ENCODE measurements at regions of chr22 and their contacts with region 1.

Region 1: GRCh38 chr22:17430412-17430811 is 61.2 kb downstream of the CECR2 start:
- DNase-seq: peak; percentile 75 to 78
- ATAC-seq: peak; percentile 96 to 98
- H3K4me3 ChIP-seq: no peak overlapping the region
- H3K27ac ChIP-seq: peak overlapping the region; percentile 86 to 93 (median 90)
- H3K4me1 ChIP-seq: peaks cover 67 to 73% of the 10 kb centered on the region in 2 donors
- H3K27me3 ChIP-seq: no peaks in the 10 kb centered on the region
- CTCF ChIP-seq: no peak
- POLR2A ChIP-seq: no peak

Region 2: GRCh38 chr22:17266251-17266971 is 164.0 kb before region 1 on chr22:
- in situ Hi-C with region 1: no loop called
- intact Hi-C with region 1: loop called (anchors 5 kb)
- DNase-seq: peak; percentile 13 to 71
- ATAC-seq: peak; percentile 14 to 26
- H3K4me3 ChIP-seq: no peak overlapping the region
- H3K27ac ChIP-seq: peak overlapping the region; percentile 93 to 98 (median 95)
- H3K4me1 ChIP-seq: peaks cover 32 to 43% of the 10 kb centered on the region in 2 donors
- H3K27me3 ChIP-seq: no peaks in the 10 kb centered on the region
- CTCF ChIP-seq: no peak
- POLR2A ChIP-seq: no peak

Region 3: GRCh38 chr22:17359501-17359900 is 70.9 kb before region 1 on chr22:
- in situ Hi-C with region 1: no loop called
- intact Hi-C with region 1: no loop called
- DNase-seq: no peak
- ATAC-seq: no peak
- H3K4me3 ChIP-seq: no peak overlapping the region
- H3K27ac ChIP-seq: no peak overlapping the region
- H3K4me1 ChIP-seq: no peaks in the 10 kb centered on the region
- H3K27me3 ChIP-seq: no peaks in the 10 kb centered on the region
- CTCF ChIP-seq: no peak
- POLR2A ChIP-seq: no peak

Region 4: DNA sequence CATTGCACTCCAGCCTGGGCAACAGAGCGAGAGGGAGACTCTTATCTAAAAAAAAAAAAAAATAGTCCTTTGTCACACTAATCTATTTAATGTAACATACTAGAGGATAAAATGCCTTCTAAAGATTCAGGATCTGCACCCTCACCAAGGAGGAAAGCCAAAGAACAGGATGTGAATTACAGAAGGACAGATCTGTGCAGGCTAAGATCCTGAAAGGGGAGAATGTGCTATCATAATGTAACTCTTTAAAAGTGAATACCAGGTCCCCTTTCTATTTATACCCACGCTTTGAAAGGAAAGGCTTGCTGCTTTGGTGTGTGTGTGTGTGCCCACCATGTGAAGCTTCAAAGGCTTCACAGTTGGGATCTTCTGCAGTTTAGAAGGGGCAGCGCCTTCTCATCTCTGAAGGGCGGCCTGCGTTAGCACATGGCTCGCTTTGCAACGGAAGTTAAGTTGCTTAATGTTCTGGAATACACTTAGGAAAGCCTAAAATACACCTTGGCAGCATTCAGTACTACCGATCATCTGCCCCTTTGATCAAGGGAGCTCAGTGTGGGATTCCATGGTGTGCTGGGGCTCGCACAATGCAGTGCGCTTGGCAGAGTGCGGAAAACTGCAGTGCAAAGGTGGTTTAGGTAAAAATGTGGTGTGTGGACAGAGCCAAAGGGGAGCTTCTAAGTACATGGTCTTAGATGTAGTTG is 54.3 kb before region 1 on chr22:
- in situ Hi-C with region 1: no loop called
- intact Hi-C with region 1: loop called (anchors 2 kb)
- DNase-seq: peak; percentile 32 to 68
- ATAC-seq: peak; percentile 78 to 91
- H3K4me3 ChIP-seq: peak overlapping the region in 3 of 4 donors; percentile 0 to 21 (median 14)
- H3K27ac ChIP-seq: peak overlapping the region; percentile 91 to 99 (median 93)
- H3K4me1 ChIP-seq: peaks cover 76 to 79% of the 10 kb centered on the region in 2 donors
- H3K27me3 ChIP-seq: no peaks in the 10 kb centered on the region
- CTCF ChIP-seq: no peak
- POLR2A ChIP-seq: no peak

Region 5: DNA sequence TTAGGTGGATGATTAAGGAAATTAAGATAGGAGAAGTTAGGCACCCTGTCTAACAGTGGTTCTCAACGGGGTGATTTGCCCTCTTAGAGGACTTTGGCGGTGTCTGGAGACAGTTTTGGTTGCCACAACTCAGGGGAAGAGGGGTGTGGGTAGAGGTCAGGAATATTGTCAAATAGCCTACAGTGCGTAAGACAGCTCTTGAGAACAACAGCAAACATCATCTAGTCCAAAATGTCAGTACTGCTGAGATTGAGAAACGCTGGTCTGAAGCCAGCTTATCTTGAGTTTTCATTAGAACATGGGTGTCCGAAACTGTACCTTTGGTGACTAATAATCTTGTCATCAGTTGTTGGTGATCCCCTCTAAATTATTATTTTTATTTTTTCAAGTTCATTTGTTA is 22.8 kb before region 1 on chr22:
- in situ Hi-C with region 1: no loop called
- intact Hi-C with region 1: loop called (anchors 2 kb)
- DNase-seq: no peak
- ATAC-seq: peak; percentile 32 to 68
- H3K4me3 ChIP-seq: no peak overlapping the region
- H3K27ac ChIP-seq: peak overlapping the region; percentile 67 to 85 (median 75)
- H3K4me1 ChIP-seq: peaks cover 53 to 59% of the 10 kb centered on the region in 2 donors
- H3K27me3 ChIP-seq: no peaks in the 10 kb centered on the region
- CTCF ChIP-seq: no peak
- POLR2A ChIP-seq: no peak

Region 6: DNA sequence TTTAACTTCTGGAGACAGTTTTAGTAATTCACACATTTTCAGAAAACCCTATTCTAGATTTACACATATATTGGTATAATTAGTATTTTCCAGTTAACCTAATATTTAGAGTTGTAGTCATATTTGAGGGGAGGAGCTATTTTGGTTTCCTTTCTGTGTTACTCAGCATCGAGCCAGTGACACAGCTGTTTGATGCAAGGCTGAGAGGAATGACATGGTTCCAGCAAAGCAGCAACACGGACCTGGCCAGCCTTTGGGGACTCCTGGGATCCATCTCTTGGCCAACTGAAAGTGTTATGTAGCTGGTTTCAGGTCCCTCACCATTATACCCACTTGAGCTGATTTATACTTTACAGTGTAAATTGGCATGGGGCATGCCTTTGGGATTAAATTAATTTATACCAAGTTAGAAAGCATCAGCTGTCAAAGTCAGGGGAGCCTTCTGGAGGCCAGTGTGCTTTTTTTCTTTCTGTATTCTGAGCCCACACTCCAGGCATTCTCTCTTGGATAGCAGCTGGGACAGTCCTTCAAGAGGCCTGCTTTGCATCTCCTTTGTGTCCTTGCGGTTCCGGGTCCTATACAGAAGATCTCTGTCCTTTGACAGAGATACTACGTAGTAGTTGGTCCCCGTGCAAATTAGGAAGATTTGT is 41.6 kb after region 1 on chr22:
- in situ Hi-C with region 1: no loop called
- intact Hi-C with region 1: no loop called
- DNase-seq: peak; percentile 24 to 65
- ATAC-seq: peak; percentile 43 to 63
- H3K4me3 ChIP-seq: no peak overlapping the region
- H3K27ac ChIP-seq: peak overlapping the region; percentile 88 to 90 (median 89)
- H3K4me1 ChIP-seq: peaks cover 75 to 86% of the 10 kb centered on the region in 2 donors
- H3K27me3 ChIP-seq: no peaks in the 10 kb centered on the region
- CTCF ChIP-seq: no peak
- POLR2A ChIP-seq: no peak

Region 7: DNA sequence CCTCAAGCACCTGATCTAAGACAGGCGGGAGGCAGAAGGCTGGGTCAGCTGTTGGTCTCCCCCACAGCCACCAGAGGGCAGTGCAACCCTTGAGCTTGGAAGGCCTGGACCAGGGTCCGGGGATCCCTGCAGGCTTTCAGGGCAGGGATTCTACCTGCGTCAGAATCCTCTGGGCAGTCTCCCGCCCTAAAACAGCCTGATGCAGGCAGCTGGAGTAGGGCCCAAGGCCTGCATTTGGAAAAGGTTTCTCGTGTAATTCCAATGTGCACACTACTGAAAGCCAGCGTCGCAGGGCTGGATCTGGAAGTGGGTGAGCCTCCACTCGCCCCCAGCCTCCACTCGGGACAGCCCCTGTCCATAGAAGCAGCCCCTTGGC is 312.1 kb after region 1 on chr22:
- in situ Hi-C with region 1: no loop called
- intact Hi-C with region 1: no loop called
- DNase-seq: peak; percentile 23 to 68
- ATAC-seq: peak; percentile 48 to 65
- H3K4me3 ChIP-seq: no peak overlapping the region
- H3K27ac ChIP-seq: no peak overlapping the region
- H3K4me1 ChIP-seq: peaks cover 5 to 6% of the 10 kb centered on the region in 2 donors
- H3K27me3 ChIP-seq: no peaks in the 10 kb centered on the region
- CTCF ChIP-seq: peak; percentile 55 to 84 (median 76)
- POLR2A ChIP-seq: no peak

Measured in gastrocnemius medialis (tissue), 4 donors.